Endothelial cell of umbilical vein (primary cell): ENCODE measurements at regions of chr22 and their contacts with region 1.

Region 1: DNA sequence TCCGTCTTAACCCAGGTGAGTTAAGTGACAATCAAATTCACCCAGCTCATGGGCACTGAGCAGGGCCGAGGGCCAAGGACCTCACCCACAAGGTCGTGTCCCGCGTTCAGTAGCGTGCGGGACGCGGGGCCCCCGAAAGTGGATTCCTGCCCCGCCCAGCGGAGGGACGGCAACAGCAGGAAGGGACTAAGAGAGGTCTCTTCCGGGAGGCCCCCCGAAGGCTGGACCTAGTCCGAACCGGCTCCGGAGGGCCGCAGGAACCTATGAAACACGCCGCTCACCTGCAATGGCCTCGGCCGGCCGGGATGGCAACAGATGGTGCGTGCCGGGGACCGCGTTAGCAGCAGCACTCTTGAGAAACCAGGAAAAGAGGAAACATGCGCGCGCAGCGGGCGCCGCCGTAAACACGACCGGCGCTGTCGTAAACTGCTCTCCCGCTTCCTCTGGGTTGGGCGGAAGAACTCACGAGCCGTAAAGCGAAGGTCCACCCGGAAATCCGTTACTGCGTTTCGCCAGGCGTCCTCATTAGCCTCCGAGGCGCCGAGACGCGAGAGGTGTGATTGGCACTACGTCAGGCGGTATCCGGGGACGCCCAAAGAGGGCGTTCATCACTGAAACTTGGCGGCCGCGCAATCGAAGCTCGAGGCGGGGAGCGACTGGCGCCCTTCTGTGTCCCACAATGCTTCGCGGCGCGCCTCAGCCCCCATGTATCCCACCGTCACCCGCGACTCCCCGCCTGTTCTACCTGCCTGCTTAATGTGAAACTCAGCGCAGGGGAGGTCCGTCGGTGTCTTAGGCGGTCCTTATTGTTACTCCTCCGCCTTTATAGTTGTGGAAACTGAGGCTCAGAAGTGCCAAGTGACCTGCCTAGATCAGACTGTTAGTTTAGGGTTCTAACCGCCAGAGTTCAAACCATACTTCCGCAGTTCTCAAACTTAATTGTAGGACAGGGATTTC is at the start of gene EIF3D:
- DNase-seq: peak; percentile 100
- H3K4me3 ChIP-seq: peak within 1 kb of the TSS; percentile 68 to 95 (median 72)
- H3K27ac ChIP-seq: peak within 1 kb of the TSS; percentile 84
- H3K4me1 ChIP-seq: peaks cover 15% of the 10 kb centered on the region
- H3K27me3 ChIP-seq: no peaks in the 10 kb centered on the region
- CTCF ChIP-seq: no peak
- POLR2A ChIP-seq: peak; percentile 86
- total RNA-seq, gene EIF3D: 192 and 201 TPM in 2 replicates

Region 2: DNA sequence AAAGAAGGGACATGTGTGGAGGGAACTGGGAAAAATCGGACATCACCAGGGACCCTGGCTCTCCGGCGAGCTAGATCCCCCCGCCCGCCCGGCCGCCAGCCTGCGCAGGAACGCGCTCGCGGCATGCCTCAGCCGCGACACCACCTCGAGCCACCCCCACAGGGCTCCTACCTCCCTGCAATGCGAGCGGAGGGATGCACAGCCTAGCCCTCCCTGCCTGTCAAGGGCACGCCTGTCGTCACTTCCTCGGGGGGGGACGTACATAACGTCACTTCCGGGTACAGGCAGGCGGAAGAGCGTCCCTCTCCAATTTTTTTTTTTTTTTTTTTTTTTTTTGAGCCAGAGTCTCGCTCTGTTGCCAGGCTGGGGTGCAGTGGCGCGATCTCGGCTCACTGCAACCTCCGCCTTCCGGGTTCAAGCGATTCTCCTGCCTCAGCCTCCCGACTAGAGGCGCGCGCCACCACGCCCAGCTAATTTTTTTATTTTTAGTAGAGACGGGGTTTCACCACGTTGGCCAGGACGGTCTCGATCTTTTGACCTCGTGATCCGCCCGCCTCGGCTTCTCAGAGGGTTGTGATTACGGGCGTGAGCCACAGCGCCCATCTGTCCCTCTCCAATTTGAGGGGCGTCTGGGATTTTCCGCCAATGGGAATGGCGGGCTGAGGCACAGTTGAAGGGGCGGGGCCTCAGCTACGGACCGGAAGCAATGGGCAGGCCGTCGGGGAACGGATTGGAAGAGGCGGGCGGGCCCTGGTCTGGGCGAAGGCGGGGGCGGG is 47.5 kb before region 1 on chr22 and contains the start of gene TXN2:
- CTCF ChIA-PET with region 1: interaction called, 3 read pairs
- POLR2A ChIA-PET with region 1: no interaction called
- dilution Hi-C with region 1: no loop called
- intact Hi-C with region 1: loop called (anchors 1 kb)
- DNase-seq: peak; percentile 94
- H3K4me3 ChIP-seq: peak within 1 kb of the TSS; percentile 53 to 73 (median 67)
- H3K27ac ChIP-seq: peak within 1 kb of the TSS; percentile 89
- H3K4me1 ChIP-seq: peaks cover 8% of the 10 kb centered on the region
- H3K27me3 ChIP-seq: no peaks in the 10 kb centered on the region
- CTCF ChIP-seq: no peak
- POLR2A ChIP-seq: peak; percentile 97
- total RNA-seq, gene TXN2: 74.3 and 75.9 TPM in 2 replicates

Region 3: DNA sequence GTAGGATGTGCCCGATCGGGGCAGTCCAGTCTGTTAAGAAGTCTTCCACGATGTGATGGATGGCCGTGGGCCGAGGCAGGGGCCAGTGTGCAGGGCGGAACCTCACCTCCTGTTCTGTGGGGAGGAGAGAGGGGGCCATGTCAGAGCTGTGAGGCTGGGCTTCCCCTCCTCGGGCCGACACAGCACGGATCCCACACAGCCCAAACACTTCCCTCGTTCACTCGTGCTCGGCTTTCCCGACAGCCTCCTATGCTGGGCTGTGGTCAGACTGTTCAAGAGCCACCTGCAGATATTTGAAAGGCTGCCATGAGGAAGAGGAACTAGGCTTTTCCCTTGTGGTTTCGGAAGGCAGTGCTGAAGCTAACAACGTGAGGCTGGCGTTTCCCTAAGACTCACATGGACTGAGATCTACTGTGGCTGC is 35.4 kb before region 1 on chr22:
- CTCF ChIA-PET with region 1: no interaction called
- POLR2A ChIA-PET with region 1: no interaction called
- dilution Hi-C with region 1: no loop called
- intact Hi-C with region 1: no loop called
- DNase-seq: no peak
- H3K4me3 ChIP-seq: no peak overlapping the region
- H3K27ac ChIP-seq: no peak overlapping the region
- H3K4me1 ChIP-seq: no peaks in the 10 kb centered on the region
- H3K27me3 ChIP-seq: no peaks in the 10 kb centered on the region
- CTCF ChIP-seq: no peak
- POLR2A ChIP-seq: no peak

Region 4: GRCh38 chr22:36506637-36507517 is 22.2 kb before region 1 on chr22 and contains the start of gene FOXRED2:
- CTCF ChIA-PET with region 1: interaction called, 7 read pairs
- POLR2A ChIA-PET with region 1: interaction called, 5 read pairs
- dilution Hi-C with region 1: no loop called
- intact Hi-C with region 1: loop called (anchors 2 kb)
- DNase-seq: peak; percentile 82
- H3K4me3 ChIP-seq: peak within 1 kb of the TSS in 2 of 3 experiments; percentile 25 to 58
- H3K27ac ChIP-seq: peak within 1 kb of the TSS; percentile 30
- H3K4me1 ChIP-seq: peaks cover 10% of the 10 kb centered on the region
- H3K27me3 ChIP-seq: no peaks in the 10 kb centered on the region
- CTCF ChIP-seq: no peak
- POLR2A ChIP-seq: peak; percentile 83
- total RNA-seq, gene FOXRED2: 14.0 and 20.4 TPM in 2 replicates

Region 5: DNA sequence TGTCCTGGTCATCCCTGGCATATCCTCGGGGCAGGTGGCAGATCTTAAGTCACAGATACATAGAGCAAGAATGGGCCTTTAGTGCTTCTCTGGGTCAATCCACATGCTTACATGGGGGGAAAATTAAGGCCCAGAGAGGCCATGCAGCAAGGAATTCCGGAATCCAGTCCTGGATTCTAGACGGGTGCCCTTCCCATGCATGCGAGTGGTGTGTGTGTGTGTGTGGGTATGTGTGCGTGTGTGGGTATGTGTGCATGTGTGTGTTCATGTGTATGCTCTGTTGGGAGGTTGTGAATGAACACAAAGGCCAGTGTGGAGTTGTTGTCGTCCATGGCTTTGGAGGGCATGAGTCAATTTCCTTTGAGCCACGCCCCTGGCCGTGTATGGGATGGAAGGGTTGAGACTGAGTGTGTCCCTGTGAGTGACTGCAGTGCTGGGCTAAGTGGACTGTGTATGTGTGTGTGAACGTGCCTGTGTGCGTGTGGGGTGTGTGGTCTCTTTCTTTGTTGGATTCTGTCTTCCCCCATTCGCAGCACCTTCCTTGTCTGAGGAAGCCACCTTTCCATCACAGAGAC is 33.3 kb after region 1 on chr22:
- CTCF ChIA-PET with region 1: no interaction called
- POLR2A ChIA-PET with region 1: no interaction called
- dilution Hi-C with region 1: no loop called
- intact Hi-C with region 1: loop called (anchors 1 kb)
- DNase-seq: peak; percentile 77
- H3K4me3 ChIP-seq: no peak overlapping the region
- H3K27ac ChIP-seq: no peak overlapping the region
- H3K4me1 ChIP-seq: peaks cover 9% of the 10 kb centered on the region
- H3K27me3 ChIP-seq: peaks cover 5 to 9% of the 10 kb centered on the region in 2 experiments
- CTCF ChIP-seq: no peak
- POLR2A ChIP-seq: no peak